ENCODE measurements at regions of chr10 and their contacts with region 1.

Region 1: DNA sequence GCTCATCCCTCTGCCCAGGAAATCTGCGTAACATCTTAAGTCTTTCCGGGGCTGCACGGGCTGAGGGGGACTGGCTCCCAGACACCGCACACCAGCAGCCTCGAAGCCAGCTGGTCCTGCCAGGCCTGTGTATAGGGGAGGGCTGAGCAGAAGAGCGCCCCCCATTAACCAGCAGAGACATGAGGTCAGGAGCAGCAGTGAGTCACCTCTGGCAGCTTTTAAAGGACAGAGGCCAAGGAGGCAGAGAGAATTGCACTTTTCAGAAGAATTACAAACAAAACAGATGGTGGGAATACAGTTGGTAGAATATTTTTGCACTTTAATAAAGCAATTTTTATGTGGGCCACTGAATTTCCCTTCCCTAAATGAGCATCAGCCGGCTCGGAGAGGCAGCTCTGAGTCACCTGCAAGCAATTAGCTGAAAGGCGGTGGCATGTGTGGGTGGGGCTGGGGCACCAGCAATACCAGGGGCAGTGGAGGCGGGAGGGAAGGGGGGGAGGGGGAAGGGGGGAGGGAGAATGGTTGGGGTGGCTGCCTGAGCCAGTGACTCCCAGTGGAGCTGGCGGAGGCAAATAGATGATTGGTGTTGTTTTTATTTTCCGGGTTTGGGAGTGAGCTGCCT is 39.1 kb downstream of the GOLGA7B start:
- DNase-seq: peak; percentile 88
- H3K4me3 ChIP-seq: no peak overlapping the region
- H3K27ac ChIP-seq: peak overlapping the region; percentile 35 to 66
- H3K4me1 ChIP-seq: peaks cover 5 to 22% of the 10 kb centered on the region in 2 experiments; a peak in 2 of 4 replicates
- H3K27me3 ChIP-seq: peaks cover 4% of the 10 kb centered on the region; the same call in 1 of the 2 replicates
- CTCF ChIP-seq: peak; percentile 41
- EP300 ChIP-seq: peak in 1 of 2 experiments; percentile 49; a peak in 2 of 4 replicates
- RAD21 ChIP-seq: no peak

Region 2: DNA sequence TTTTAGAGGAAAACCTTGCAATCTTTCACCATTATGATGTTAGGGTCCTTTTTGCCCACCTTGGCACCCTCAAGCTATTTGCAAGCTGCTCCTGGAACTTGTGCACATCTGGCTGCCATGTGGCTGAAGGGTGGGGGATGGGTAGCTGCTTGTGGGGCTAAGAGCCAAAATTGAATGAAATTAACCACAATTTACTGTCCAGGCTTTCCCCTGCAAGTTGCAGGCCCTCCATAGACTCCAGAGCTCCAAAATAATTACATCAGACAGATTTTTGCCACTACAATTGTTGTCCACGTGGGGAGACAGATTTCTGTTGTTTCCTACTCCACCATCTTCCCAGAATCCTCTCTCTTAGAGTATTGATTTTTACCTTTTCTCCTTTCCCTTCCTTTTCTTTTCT is 229.2 kb before region 1 on chr10:
- CTCF ChIA-PET with region 1: no interaction called
- POLR2A ChIA-PET with region 1: no interaction called
- DNase-seq: peak; percentile 78
- H3K4me3 ChIP-seq: no peak overlapping the region
- H3K27ac ChIP-seq: peak overlapping the region; percentile 37 to 81; a peak in 3 of 4 replicates
- H3K4me1 ChIP-seq: peaks cover 0 to 8% of the 10 kb centered on the region in 2 experiments; a peak in 2 of 4 replicates
- H3K27me3 ChIP-seq: no peaks in the 10 kb centered on the region
- CTCF ChIP-seq: no peak
- EP300 ChIP-seq: peak; percentile 44 to 93; a peak in 3 of 4 replicates
- RAD21 ChIP-seq: peak; percentile 18; the same call in 1 of the 2 replicates

Region 3: DNA sequence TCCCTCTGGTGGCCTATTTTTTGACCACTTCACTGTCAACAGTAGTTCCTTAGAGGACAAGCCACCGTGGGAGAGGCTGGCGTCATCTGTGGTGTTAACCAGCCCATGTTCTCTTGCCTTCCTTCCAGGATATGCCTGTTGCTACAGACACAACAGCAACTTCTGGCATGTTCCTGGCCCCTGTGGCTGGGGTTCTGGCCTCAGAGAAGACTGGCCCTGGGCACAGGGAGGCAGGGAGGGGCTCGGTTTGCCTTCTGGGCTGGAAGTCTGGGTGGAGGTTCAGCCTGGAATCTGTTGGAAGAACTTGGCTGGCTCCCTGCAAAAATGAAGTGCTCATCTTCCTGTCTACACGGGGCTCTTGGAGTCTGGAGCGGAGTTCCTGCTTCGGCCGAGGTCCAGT is 13.4 kb before region 1 on chr10:
- CTCF ChIA-PET with region 1: interaction called, 15 read pairs
- POLR2A ChIA-PET with region 1: interaction called, 4 read pairs
- DNase-seq: no peak
- H3K4me3 ChIP-seq: no peak overlapping the region
- H3K27ac ChIP-seq: no peak overlapping the region
- H3K4me1 ChIP-seq: peaks cover 0 to 11% of the 10 kb centered on the region in 2 experiments; a peak in 1 of 4 replicates
- H3K27me3 ChIP-seq: peaks cover 8% of the 10 kb centered on the region; the same call in 1 of the 2 replicates
- CTCF ChIP-seq: no peak
- EP300 ChIP-seq: no peak
- RAD21 ChIP-seq: no peak

Region 4: GRCh38 chr10:97903128-97904017 is 14.6 kb after region 1 on chr10:
- CTCF ChIA-PET with region 1: interaction called, 10 read pairs
- POLR2A ChIA-PET with region 1: no interaction called
- DNase-seq: no peak
- H3K4me3 ChIP-seq: no peak overlapping the region
- H3K27ac ChIP-seq: no peak overlapping the region
- H3K4me1 ChIP-seq: peaks cover 0 to 12% of the 10 kb centered on the region in 2 experiments; a peak in 1 of 4 replicates
- H3K27me3 ChIP-seq: peaks cover 9% of the 10 kb centered on the region; the same call in 1 of the 2 replicates
- CTCF ChIP-seq: no peak
- EP300 ChIP-seq: no peak
- RAD21 ChIP-seq: no peak; the same call in 1 of the 2 replicates

Measured in SK-N-SH (cell line).